A549 (cell line): ENCODE measurements at regions of chr18 and their contacts with region 1.

Region 1: DNA sequence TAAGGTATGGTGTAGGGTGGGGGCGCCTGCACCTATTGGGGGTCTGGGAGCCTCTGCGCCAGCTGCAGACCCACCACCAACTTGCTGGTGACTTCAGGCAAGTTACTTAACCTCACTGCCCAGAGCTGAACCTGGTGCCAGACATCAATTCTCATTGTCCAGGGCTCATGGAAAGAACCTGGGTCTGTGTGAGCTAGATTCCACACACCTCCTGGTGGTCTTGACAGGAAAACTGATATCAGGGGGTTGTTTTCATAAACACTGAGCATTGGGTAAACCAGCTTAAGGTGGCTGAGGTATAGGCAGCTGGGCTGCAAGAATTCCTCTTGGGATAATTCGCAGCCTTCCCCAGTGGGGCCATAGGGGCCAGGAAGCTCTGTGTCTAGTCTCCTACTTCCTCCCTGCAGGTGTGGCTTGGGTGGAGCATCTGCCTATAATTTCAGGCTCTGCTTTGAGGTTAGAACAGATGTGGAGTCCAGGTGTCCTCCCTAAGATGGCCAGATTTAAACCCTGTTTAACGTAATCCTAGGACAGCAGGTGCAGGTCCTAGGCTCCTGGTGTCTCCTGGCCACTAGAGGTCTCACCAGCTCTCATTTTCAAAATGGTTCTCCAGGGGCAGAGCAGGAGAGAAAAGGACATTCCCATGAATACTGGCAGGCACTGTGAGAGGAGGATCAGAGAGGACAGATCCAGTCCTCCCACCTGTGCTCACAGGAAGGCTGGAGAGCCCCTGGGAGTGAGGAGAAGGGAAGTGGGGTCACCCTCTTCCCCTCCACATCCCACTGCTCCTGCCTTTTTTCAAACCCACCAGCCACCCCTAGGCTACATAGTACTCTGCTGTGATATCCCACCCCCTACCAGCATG is 100.4 kb upstream of the SMAD2 start:
- DNase-seq: peak; percentile 40 to 63
- ATAC-seq: peak; percentile 88 to 94
- H3K4me3 ChIP-seq: no peak overlapping the region
- H3K27ac ChIP-seq: peak overlapping the region in 1 of 2 experiments; percentile 48; a peak in 1 of 6 replicates
- H3K4me1 ChIP-seq: peaks cover 23% of the 10 kb centered on the region
- CTCF ChIP-seq: peak; percentile 70
- EP300 ChIP-seq: no peak
- POLR2A ChIP-seq: no peak
- RAD21 ChIP-seq: peak; percentile 74 to 76

Region 2: DNA sequence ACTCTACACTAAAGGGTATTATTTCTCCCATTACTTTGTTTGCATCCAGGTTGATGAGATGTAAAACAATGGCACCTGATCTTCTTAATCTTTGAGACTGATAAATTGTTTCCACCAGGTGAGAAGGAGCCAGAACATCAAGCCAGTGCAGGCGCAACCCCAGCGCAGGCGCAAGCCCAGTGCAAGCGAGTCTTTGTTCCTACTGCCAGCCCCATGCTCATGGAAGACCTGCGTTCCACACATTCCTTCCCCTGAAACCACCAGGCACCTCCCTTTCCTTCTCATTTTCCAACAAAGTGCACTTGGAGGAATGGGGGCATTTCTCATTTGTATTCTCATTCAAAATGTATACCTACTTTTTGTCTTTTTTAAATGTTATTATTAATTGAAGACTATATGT is 88.4 kb after region 1 on chr18:
- CTCF ChIA-PET with region 1: no interaction called
- POLR2A ChIA-PET with region 1: no interaction called
- DNase-seq: no peak
- ATAC-seq: no peak
- H3K4me3 ChIP-seq: no peak overlapping the region
- H3K27ac ChIP-seq: no peak overlapping the region
- H3K4me1 ChIP-seq: no peaks in the 10 kb centered on the region
- CTCF ChIP-seq: no peak
- EP300 ChIP-seq: no peak
- POLR2A ChIP-seq: no peak
- RAD21 ChIP-seq: no peak

Region 3: DNA sequence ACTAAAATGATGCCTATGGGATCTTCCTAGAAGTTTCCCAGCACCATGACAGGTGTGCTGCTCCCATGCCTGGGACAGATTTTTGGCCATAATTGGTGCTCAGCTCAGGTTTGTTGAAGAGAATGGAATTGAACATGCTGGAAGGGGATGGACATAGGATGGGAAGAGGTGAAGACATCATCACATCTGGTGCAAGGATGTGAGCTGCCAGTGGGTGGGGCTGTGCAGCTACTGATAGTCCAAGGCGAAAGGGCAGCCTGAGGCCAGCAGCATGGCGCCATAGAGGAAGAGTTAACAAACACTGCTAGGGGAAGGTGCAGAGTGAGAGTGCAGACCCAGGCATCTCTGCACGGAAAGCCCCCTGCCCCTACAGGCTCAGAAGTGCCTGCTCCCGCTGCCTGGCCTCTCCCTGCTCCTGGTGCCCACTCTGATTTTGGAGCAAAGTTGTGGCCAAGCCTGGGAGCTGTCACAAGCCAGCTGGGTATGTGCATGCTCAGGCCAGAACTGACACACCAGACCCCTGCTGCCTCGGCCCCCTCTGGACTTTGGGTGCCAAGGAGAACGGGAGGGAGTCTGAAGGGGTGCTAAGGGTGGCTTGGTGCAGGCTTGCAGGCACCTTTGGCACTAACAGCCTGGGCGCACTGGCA is 199.7 kb after region 1 on chr18:
- CTCF ChIA-PET with region 1: interaction called, 11 read pairs
- POLR2A ChIA-PET with region 1: no interaction called
- DNase-seq: peak; percentile 66 to 76
- ATAC-seq: peak; percentile 90 to 99
- H3K4me3 ChIP-seq: no peak overlapping the region
- H3K27ac ChIP-seq: peak overlapping the region in 1 of 2 experiments; percentile 46; a peak in 2 of 6 replicates
- H3K4me1 ChIP-seq: peaks cover 6% of the 10 kb centered on the region; the same call in 1 of the 3 replicates
- CTCF ChIP-seq: peak; percentile 49
- EP300 ChIP-seq: no peak
- POLR2A ChIP-seq: no peak
- RAD21 ChIP-seq: peak; percentile 72 to 83

Region 4: DNA sequence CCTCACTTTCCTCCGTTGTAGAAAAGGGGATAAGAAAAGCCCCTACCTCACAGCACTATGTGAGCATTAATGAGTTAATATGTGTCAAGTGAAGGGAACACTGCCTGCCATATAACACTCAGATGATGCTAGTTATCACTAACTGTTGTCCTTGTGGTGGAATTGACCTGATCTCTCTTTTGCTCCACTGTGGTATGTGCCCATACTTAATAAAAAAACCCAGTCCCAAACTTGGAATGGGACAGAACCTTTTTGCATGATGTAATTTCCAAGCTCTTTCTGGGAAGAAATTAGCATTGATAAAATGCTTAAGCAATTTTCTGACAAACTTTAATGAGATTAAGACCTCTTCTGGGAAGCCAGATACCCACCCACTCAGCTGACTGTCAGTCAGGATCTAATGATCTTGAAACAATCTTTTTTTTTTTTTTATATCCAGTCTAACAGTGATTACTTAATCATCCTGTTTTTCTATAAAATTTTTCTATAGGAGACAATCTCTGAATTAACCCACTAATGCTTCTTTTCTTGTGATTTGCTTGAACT is 219.6 kb after region 1 on chr18:
- CTCF ChIA-PET with region 1: no interaction called
- POLR2A ChIA-PET with region 1: no interaction called
- DNase-seq: no peak
- ATAC-seq: no peak
- H3K4me3 ChIP-seq: no peak overlapping the region
- H3K27ac ChIP-seq: no peak overlapping the region
- H3K4me1 ChIP-seq: no peaks in the 10 kb centered on the region
- CTCF ChIP-seq: no peak
- EP300 ChIP-seq: no peak
- POLR2A ChIP-seq: no peak
- RAD21 ChIP-seq: no peak

Region 5: DNA sequence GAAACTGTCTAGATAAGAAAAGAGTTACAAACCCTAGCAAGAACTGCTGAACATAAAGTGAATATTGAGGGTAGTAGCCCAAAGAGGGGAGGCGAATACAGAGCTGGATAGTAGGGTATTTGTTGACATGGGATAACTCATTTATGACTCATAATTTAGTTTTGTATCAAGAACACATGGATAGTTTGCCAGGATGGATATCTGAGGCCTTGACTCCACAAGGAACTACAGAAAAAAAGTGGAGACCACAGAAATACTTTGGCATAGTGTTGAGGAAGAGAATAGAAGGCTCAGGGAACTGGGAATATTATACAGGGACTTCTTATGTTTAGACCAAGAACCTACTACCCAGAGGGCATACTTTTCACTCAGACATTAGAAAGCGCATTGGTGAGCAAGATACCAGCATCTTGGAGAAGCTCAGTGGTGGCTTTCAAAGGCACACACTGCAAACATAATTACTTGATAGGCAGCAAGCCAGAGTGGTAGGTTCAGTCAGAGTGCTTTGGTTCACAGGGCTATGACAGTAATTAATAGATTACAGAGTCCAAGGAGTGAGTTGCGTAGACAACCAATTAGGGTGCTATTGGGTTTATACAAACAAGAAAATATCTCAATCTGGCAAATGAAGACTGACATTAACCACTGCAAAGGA is 430.2 kb after region 1 on chr18:
- CTCF ChIA-PET with region 1: interaction called, 12 read pairs
- POLR2A ChIA-PET with region 1: no interaction called
- DNase-seq: peak in 1 of 2 experiments; percentile 29
- ATAC-seq: no peak; a peak in 1 of 6 replicates
- H3K4me3 ChIP-seq: no peak overlapping the region
- H3K27ac ChIP-seq: no peak overlapping the region
- H3K4me1 ChIP-seq: peaks cover 12% of the 10 kb centered on the region
- CTCF ChIP-seq: no peak
- EP300 ChIP-seq: no peak
- POLR2A ChIP-seq: no peak
- RAD21 ChIP-seq: no peak